Psoas muscle (tissue), 8 donors: ENCODE measurements at regions of chr10 and their contacts with region 1.

Region 1: GRCh38 chr10:103652599-103653281 is 159.2 kb downstream of the NEURL1 start:
- DNase-seq: peak; percentile 72 to 90
- ATAC-seq: peak; percentile 74 to 80 (median 76)
- H3K4me3 ChIP-seq: no peak overlapping the region
- H3K27ac ChIP-seq: peak overlapping the region; percentile 77
- H3K4me1 ChIP-seq: peaks cover 66% of the 10 kb centered on the region
- H3K27me3 ChIP-seq: no peaks in the 10 kb centered on the region
- CTCF ChIP-seq: no peak

Region 2: GRCh38 chr10:103618575-103619423 is 33.9 kb before region 1 on chr10:
- intact Hi-C with region 1: loop called (anchors 5 kb)
- DNase-seq: peak; percentile 75 to 86
- ATAC-seq: peak in 2 of 4 donors; percentile 27 to 44
- H3K4me3 ChIP-seq: no peak overlapping the region
- H3K27ac ChIP-seq: peak overlapping the region; percentile 50
- H3K4me1 ChIP-seq: peaks cover 82% of the 10 kb centered on the region
- H3K27me3 ChIP-seq: no peaks in the 10 kb centered on the region
- CTCF ChIP-seq: no peak

Region 3: GRCh38 chr10:103668351-103669242 is 15.9 kb after region 1 on chr10:
- intact Hi-C with region 1: loop called in 1 of 2 experiments (anchors 1 kb)
- DNase-seq: peak; percentile 81 to 87
- ATAC-seq: peak; percentile 18 to 48 (median 34)
- H3K4me3 ChIP-seq: peak overlapping the region; percentile 23
- H3K27ac ChIP-seq: peak overlapping the region; percentile 47
- H3K4me1 ChIP-seq: peaks cover 32% of the 10 kb centered on the region
- H3K27me3 ChIP-seq: no peaks in the 10 kb centered on the region
- CTCF ChIP-seq: no peak

Region 4: DNA sequence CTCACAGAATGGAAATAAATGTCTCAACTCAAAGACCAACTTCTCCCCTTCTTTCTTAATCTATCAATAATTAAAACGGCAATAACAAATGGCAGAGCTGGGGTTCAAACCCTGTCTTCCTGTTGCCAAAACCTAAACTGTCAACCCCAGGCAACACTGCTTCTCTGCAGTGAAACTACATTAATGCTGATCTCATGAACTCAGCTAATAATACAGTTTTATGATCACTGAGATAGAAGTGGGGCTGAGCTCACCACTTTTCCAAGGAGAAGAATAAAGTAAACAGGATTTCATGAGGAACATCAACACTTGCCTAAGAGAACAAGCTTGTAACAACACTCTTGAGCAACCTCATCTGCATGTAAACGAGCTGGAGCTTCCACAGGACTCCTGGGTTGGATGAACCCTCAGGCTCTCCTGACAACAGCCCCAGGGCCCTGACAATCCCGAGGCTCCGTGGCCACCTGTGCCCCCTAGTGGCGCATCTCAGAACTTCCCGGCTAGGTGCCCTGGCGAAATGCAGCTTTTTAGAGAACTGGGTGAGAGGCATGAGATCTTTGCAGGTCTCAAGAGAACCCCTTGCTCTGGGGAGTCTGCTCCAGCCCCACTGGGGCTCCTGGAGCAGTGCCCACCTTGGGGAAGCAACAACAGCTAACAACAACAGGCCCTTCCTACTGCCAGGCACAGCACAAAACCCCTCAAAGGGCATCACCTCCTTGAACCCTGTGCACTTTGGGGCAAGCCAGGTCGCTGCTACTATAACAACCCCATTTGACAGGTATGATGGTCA is 33.3 kb after region 1 on chr10:
- intact Hi-C with region 1: no loop called
- DNase-seq: peak; percentile 77 to 91
- ATAC-seq: peak; percentile 90 to 94 (median 92)
- H3K4me3 ChIP-seq: no peak overlapping the region
- H3K27ac ChIP-seq: no peak overlapping the region
- H3K4me1 ChIP-seq: peaks cover 9% of the 10 kb centered on the region
- H3K27me3 ChIP-seq: no peaks in the 10 kb centered on the region
- CTCF ChIP-seq: peak; percentile 97